Adrenal gland (tissue), 19 donors: ENCODE measurements at regions of chr11 and their contacts with region 1.

Region 1: DNA sequence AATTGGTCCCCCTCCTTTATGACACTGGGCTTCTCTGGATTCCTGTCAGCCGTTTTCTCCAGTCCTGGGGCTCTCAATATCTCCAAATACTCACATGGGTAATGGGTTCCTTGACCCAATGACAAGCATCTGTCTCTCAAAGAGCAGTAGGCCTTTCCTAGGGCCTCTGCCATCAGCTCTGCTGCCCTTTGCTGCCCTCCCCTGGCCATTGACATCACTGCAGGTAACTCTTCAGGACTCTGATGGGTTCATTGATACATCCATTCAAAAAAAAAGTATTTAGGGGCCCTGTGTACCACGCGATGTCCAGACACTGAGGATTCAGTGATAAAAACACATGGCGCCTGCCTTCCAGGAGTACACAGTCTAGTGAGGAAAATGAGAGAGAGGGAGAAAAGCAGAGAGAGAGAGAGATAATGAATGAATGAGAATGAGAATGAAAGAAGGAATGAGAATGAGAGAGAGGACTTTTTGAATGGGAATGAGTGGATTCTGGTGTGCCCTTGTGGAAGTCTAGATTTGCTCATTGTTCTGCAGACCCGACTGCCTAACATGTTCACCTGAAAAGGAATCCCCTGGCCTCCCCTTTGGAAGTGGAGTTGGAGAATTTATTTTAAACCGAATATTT is 42.6 kb upstream of the OLFML1 start:
- DNase-seq: peak; percentile 54 to 92 (median 75)
- H3K4me3 ChIP-seq: no peak overlapping the region
- H3K27ac ChIP-seq: no peak overlapping the region
- H3K4me1 ChIP-seq: no peaks in the 10 kb centered on the region
- H3K27me3 ChIP-seq: no peaks in the 10 kb centered on the region
- CTCF ChIP-seq: peak; percentile 74 to 86 (median 82)
- POLR2A ChIP-seq: no peak

Region 2: GRCh38 chr11:7098235-7098832 is 344.4 kb before region 1 on chr11:
- intact Hi-C with region 1: loop called in 1 of 2 experiments (anchors 5 kb)
- DNase-seq: peak in 1 of 7 donors; percentile 2
- H3K4me3 ChIP-seq: no peak overlapping the region
- H3K27ac ChIP-seq: no peak overlapping the region
- H3K4me1 ChIP-seq: no peaks in the 10 kb centered on the region
- H3K27me3 ChIP-seq: no peaks in the 10 kb centered on the region
- CTCF ChIP-seq: peak; percentile 41 to 78 (median 74)
- POLR2A ChIP-seq: no peak

Region 3: DNA sequence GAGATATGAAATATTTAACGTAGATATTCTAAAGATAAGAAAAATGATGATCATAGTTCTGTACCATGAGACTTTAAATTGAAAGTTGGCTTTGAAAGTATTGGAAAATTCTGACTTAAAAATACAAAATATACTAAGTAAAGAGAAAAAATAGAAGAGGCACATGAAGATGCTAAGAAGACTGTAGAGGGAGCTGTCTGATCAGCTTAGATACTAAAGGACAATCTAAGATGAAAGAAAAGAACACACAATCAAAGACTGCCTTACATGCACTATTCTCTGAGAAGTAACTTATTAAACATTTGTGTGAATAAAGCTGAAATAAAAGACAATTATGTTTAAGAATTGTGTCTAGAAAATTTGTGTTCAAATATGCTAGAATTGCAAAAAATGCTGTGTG is 298.8 kb before region 1 on chr11:
- intact Hi-C with region 1: loop called in 1 of 2 experiments (anchors 5 kb)
- DNase-seq: no peak
- H3K4me3 ChIP-seq: no peak overlapping the region
- H3K27ac ChIP-seq: no peak overlapping the region
- H3K4me1 ChIP-seq: no peaks in the 10 kb centered on the region
- H3K27me3 ChIP-seq: no peaks in the 10 kb centered on the region
- CTCF ChIP-seq: peak; percentile 5 to 55 (median 44)
- POLR2A ChIP-seq: no peak

Region 4: DNA sequence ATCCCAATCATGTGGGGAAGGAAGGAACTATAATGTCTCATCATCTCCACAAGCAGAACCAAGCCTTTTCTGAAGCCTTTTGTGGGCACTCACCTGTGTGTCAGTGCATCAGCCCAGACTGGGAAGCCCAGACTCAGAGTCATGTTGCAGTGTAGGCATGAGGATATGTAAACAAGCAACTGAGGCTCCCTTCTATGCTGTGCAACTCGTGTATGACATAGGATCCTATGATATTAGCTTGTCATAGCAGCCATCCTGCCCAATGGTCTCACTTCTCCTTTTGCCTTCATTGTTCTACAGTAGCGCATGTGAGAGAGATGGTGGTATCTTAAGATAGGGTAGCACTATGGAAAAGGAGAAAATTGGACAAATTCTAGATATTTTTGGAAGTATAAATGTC is 60.8 kb before region 1 on chr11:
- intact Hi-C with region 1: no loop called
- DNase-seq: no peak
- H3K4me3 ChIP-seq: no peak overlapping the region
- H3K27ac ChIP-seq: no peak overlapping the region
- H3K4me1 ChIP-seq: no peaks in the 10 kb centered on the region
- H3K27me3 ChIP-seq: no peaks in the 10 kb centered on the region
- CTCF ChIP-seq: no peak
- POLR2A ChIP-seq: no peak

Region 5: DNA sequence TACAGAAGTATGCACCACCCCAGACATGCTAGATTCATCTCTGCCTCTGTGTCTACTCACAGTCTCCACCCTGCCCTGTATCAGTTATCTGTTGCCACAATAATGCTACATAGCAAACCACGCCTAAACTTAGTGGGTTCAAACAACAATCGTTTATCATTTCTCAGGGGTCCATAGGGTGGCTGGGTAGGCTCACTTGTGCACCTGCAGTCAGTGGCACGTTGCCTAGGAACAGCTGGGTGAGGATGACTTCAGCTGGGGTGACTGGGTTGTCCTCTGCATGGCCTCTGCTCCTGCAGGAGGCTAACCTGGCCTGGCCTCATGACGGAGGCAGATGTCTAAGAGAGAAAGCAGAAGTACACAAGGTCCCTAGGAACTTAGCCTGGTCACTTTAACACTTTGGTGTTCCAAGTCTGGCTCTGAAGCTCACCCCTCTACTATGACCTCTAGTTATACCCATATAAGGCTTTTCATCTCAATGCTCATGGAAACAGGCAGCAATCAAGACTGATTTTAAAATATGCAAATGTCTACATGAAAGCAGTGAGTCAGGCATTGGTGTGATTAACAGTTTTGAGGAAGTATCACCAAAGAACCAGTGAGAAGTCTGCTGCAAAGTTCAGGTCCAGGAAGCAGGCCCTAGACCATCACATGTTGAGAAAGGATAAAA is 53.3 kb after region 1 on chr11:
- intact Hi-C with region 1: no loop called
- DNase-seq: peak in 3 of 7 donors; percentile 30 to 38 (median 35)
- H3K4me3 ChIP-seq: no peak overlapping the region
- H3K27ac ChIP-seq: peak overlapping the region in 1 of 5 donors; percentile 65
- H3K4me1 ChIP-seq: no peaks in the 10 kb centered on the region
- H3K27me3 ChIP-seq: no peaks in the 10 kb centered on the region
- CTCF ChIP-seq: no peak
- POLR2A ChIP-seq: no peak

Region 6: GRCh38 chr11:7851391-7851790 is 408.7 kb after region 1 on chr11:
- intact Hi-C with region 1: no loop called
- DNase-seq: no peak
- H3K4me3 ChIP-seq: no peak overlapping the region
- H3K27ac ChIP-seq: no peak overlapping the region
- H3K4me1 ChIP-seq: no peaks in the 10 kb centered on the region
- H3K27me3 ChIP-seq: no peaks in the 10 kb centered on the region
- CTCF ChIP-seq: no peak
- POLR2A ChIP-seq: no peak